Activated B cell treated with CpG ODN at 0.5 μM for 24 hours (primary cell): ENCODE measurements at regions of chr17 and their contacts with region 1.

Region 1: GRCh38 chr17:80737106-80738019 is 192.7 kb downstream of the RPTOR start:
- DNase-seq: peak; percentile 59
- ATAC-seq: peak; percentile 85
- H3K4me3 Mint-ChIP-seq: peak overlapping the region; percentile 65
- H3K27ac Mint-ChIP-seq: peak overlapping the region; percentile 87
- H3K4me1 Mint-ChIP-seq: peaks cover 62% of the 10 kb centered on the region
- H3K27me3 Mint-ChIP-seq: no peaks in the 10 kb centered on the region
- CTCF ChIP-seq: no peak

Region 2: DNA sequence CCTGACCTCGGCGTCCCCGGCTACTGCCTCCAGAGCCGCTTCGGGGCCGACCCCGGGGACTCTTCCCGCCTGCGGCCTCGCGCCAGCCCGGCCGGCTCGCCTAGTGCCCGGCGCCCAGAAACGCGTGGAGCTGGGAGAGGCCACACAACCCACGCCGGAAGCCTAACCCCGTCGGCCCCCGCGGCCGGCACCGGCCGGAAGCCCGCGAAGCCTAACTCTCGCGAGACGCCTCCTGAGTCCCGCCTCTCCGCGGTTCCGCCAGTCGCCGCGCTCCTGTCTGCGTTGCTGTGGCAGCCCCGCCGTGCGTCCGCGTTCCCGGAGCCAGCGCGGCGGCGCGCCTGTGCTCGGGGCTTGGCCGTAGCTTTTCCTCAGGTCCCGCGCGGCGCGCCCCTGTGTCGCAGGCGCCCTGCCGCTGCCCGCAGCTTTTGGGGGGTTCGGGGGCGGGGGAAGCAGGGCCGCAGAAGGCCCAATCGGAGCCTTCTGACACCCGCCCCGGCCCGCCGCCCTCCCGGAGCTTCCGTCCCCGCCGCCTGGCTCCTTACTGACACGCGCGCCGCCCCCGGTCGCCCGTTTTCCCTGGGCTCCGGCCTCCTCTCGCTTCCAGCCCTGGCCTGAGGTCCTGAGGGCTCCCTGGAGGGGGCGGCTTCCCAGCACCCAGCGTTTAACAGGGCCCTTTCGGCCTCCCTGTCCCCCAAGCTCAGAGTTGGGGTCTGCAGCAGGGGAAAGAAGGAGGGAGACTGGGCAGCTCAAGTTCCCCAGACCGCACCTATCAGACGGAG is 282.6 kb before region 1 on chr17:
- CTCF ChIA-PET with region 1: interaction called, 7 read pairs
- POLR2A ChIA-PET with region 1: interaction called, 12 read pairs
- intact Hi-C with region 1: no loop called
- DNase-seq: peak; percentile 95
- ATAC-seq: peak; percentile 92
- H3K4me3 Mint-ChIP-seq: peak overlapping the region; percentile 92
- H3K27ac Mint-ChIP-seq: peak overlapping the region; percentile 92
- H3K4me1 Mint-ChIP-seq: peaks cover 15% of the 10 kb centered on the region
- H3K27me3 Mint-ChIP-seq: peaks cover 25% of the 10 kb centered on the region
- CTCF ChIP-seq: no peak

Region 3: GRCh38 chr17:80663781-80664206 is 73.6 kb before region 1 on chr17:
- CTCF ChIA-PET with region 1: no interaction called
- POLR2A ChIA-PET with region 1: no interaction called
- intact Hi-C with region 1: loop called (anchors 10 kb)
- DNase-seq: no peak
- ATAC-seq: no peak
- H3K4me3 Mint-ChIP-seq: no peak overlapping the region
- H3K27ac Mint-ChIP-seq: no peak overlapping the region
- H3K4me1 Mint-ChIP-seq: peaks cover 56% of the 10 kb centered on the region
- H3K27me3 Mint-ChIP-seq: no peaks in the 10 kb centered on the region
- CTCF ChIP-seq: no peak

Region 4: GRCh38 chr17:80773243-80773991 is 36.1 kb after region 1 on chr17:
- CTCF ChIA-PET with region 1: interaction called, 5 read pairs
- POLR2A ChIA-PET with region 1: interaction called, 11 read pairs
- intact Hi-C with region 1: no loop called
- DNase-seq: no peak
- ATAC-seq: peak; percentile 62
- H3K4me3 Mint-ChIP-seq: no peak overlapping the region
- H3K27ac Mint-ChIP-seq: peak overlapping the region; percentile 2
- H3K4me1 Mint-ChIP-seq: peaks cover 33% of the 10 kb centered on the region
- H3K27me3 Mint-ChIP-seq: no peaks in the 10 kb centered on the region
- CTCF ChIP-seq: no peak

Region 5: GRCh38 chr17:80832888-80833583 is 95.7 kb after region 1 on chr17:
- CTCF ChIA-PET with region 1: interaction called, 3 read pairs
- POLR2A ChIA-PET with region 1: interaction called, 11 read pairs
- intact Hi-C with region 1: loop called (anchors 1 kb)
- DNase-seq: peak; percentile 71
- ATAC-seq: peak; percentile 89
- H3K4me3 Mint-ChIP-seq: peak overlapping the region; percentile 94
- H3K27ac Mint-ChIP-seq: peak overlapping the region; percentile 98
- H3K4me1 Mint-ChIP-seq: peaks cover 23% of the 10 kb centered on the region
- H3K27me3 Mint-ChIP-seq: no peaks in the 10 kb centered on the region
- CTCF ChIP-seq: no peak

Region 6: DNA sequence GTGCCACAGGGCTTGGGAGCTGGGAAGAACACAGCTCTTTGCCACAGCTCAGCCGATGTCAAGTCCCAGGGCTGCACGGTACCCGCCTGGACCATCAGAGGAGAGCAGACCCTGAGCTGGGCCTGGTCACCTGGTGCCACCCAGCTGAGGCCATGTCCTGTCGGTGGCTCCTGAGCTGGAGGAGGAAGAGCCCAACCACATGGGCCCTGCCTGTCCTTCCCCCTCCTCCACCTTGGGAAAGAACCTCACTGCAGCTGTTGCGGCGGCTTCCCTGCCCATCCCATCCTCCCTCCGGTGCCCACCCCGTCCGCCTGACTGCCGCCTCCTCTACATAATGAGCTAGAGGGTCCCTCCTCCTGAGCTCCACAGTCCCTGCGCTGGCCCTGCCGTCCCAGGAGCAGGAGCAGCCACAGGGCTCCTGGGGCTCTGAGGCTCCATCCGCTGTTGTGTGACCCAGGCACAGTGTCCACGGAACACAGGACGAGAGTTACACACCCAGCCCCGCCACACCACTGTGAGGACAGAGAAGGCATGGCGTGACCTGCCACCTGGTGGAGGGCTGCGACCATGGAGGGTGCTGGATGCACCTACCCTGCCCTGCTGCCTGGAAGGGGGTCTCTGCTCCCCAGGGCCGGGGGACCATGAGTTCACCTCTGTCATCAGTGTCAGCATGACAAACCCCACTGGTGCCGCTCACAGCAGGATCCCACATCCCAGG is 232.8 kb after region 1 on chr17:
- CTCF ChIA-PET with region 1: interaction called, 5 read pairs
- POLR2A ChIA-PET with region 1: no interaction called
- intact Hi-C with region 1: loop called (anchors 1 kb)
- DNase-seq: peak; percentile 58
- ATAC-seq: peak; percentile 91
- H3K4me3 Mint-ChIP-seq: peak overlapping the region; percentile 41
- H3K27ac Mint-ChIP-seq: peak overlapping the region; percentile 24
- H3K4me1 Mint-ChIP-seq: peaks cover 19% of the 10 kb centered on the region
- H3K27me3 Mint-ChIP-seq: peaks cover 4% of the 10 kb centered on the region
- CTCF ChIP-seq: no peak